WTC11 (cell line): ENCODE measurements at regions of chr10 and their contacts with region 1.

Region 1: GRCh38 chr10:71547876-71548846 is 151.4 kb downstream of the CDH23 start:
- DNase-seq: peak; percentile 52
- ATAC-seq: peak; percentile 59
- H3K4me3 Mint-ChIP-seq: no peak overlapping the region
- H3K27ac Mint-ChIP-seq: no peak overlapping the region
- H3K4me1 Mint-ChIP-seq: peaks cover 60% of the 10 kb centered on the region
- H3K27me3 Mint-ChIP-seq: no peaks in the 10 kb centered on the region
- CTCF ChIP-seq: no peak; the same call in 1 of the 2 replicates

Region 2: GRCh38 chr10:71531485-71532446 is 16.4 kb before region 1 on chr10:
- CTCF ChIA-PET with region 1: interaction called, 11 read pairs
- POLR2A ChIA-PET with region 1: no interaction called
- DNase-seq: no peak
- ATAC-seq: no peak
- H3K4me3 Mint-ChIP-seq: no peak overlapping the region
- H3K27ac Mint-ChIP-seq: no peak overlapping the region
- H3K4me1 Mint-ChIP-seq: peaks cover 27% of the 10 kb centered on the region
- H3K27me3 Mint-ChIP-seq: no peaks in the 10 kb centered on the region
- CTCF ChIP-seq: no peak